A673 (cell line): ENCODE measurements at regions of chr3 and their contacts with region 1.

Region 1: DNA sequence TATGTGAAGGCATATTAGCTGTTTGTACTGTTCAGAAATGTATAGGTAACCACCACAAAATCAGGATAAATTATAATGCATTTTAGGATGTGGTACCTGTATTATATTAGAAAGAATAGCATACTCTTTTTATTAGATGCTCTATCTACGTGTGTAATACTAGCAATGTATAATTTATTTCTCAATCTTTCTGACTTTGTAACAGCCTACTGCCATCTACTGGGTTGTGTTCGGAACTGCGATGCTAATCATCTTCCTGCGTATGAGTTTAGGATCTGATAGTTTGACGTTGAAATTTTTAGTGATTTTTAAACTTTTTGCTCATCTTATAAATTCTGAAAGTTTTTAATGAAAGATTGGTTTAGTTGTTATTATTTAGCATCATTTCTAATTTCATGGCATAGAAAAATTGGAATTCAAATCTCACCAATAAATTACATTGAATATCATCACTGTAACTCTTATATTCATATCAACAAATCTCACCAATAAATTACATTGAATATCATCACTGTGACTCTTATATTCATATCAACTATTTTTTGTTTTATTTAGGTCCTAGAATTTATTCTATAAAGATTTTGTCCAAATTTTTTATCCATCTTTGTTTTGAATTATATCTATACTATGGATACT is 322.7 kb upstream of the ZNF717 start:
- DNase-seq: peak; percentile 28
- H3K4me3 ChIP-seq: no peak overlapping the region
- H3K27ac ChIP-seq: no peak overlapping the region
- H3K4me1 ChIP-seq: no peaks in the 10 kb centered on the region
- H3K27me3 ChIP-seq: no peaks in the 10 kb centered on the region
- CTCF ChIP-seq: peak; percentile 64

Region 2: GRCh38 chr3:76024640-76025039 is 83.4 kb before region 1 on chr3:
- CTCF ChIA-PET with region 1: no interaction called
- POLR2A ChIA-PET with region 1: no interaction called
- intact Hi-C with region 1: loop called (anchors 5 kb)
- DNase-seq: peak; percentile 10
- H3K4me3 ChIP-seq: no peak overlapping the region
- H3K27ac ChIP-seq: no peak overlapping the region
- H3K4me1 ChIP-seq: no peaks in the 10 kb centered on the region
- H3K27me3 ChIP-seq: no peaks in the 10 kb centered on the region
- CTCF ChIP-seq: peak; percentile 48